HEK293 (cell line): ENCODE measurements at regions of chr5 and their contacts with region 1.

Region 1: DNA sequence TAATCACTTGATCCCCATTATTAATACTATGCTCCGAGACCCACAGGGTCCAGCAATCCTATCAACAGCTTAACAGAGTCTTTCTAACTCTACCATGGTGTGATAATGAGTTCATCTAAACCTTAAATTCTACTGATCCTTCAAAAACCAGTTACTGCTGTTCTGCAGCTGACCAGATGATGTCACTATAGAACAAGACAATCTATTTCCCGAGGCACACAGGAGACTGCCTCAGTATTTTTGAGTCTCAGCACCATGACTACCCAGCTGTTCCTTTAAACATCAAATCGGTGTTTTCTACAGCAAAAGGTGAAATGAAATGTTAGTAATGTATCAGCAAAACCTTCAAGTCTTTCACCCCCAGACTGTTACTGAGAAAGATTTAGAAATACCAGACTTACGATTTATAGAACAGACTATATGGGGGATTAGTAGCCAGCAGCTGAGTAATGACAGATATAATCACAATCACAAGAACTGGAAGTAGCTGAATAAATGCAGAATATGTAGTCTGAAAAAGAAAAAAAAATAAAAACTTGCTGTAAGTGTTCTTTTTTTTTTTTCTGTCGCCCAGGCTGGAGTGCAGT is 16.9 kb downstream of the DNAJC18 start:
- H3K4me3 ChIP-seq: no peak overlapping the region
- H3K27ac ChIP-seq: no peak overlapping the region
- H3K4me1 ChIP-seq: no peaks in the 10 kb centered on the region
- CTCF ChIP-seq: peak; percentile 70

Region 2: GRCh38 chr5:139273572-139274289 is 148.7 kb before region 1 on chr5:
- CTCF ChIA-PET with region 1: interaction called, 7 read pairs
- POLR2A ChIA-PET with region 1: interaction called, 14 read pairs
- H3K4me3 ChIP-seq: peak overlapping the region; percentile 48
- H3K27ac ChIP-seq: peak overlapping the region; percentile 52
- H3K4me1 ChIP-seq: peaks cover 17% of the 10 kb centered on the region
- CTCF ChIP-seq: peak; percentile 56

Region 3: DNA sequence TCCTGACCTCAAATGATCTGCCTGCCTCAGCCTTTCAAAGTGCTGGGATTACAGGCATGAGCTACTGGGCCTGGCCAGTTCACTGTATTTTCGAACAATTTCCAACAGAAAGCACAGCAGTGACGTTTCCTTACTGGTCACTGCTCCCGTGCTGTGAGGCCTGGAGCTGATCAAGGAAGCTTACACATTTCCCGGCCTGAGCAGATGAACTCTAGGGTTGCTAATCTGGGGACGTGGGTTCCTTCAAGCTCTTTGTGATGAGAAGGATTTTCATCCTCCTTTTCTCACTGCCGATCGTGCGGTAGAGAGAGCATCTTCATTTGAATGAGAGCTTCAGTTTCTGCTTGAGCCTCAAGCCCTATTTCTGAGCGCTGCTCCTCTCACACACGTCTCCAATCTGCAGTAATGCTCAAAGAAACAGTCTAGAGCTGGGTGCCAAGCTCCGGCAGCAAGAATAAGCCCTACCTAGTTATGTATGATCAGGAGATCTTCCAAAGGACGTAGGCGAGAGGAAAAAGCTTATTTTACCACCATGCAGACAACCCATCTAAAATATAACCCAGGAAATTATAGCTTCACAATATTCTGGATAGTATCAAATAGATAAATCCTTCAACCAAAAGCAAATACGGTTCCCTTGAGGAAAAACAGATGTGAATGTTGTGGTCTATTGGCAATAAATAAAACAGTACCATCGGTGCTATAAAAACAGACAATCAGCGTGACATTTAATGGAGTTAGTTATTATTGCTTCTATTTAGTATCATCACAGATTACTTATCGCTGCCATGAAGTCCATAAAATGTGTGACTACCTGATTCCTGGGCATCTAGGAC is 11.2 kb before region 1 on chr5:
- CTCF ChIA-PET with region 1: interaction called, 19 read pairs
- POLR2A ChIA-PET with region 1: no interaction called
- H3K4me3 ChIP-seq: no peak overlapping the region
- H3K27ac ChIP-seq: no peak overlapping the region
- H3K4me1 ChIP-seq: no peaks in the 10 kb centered on the region
- CTCF ChIP-seq: no peak

Region 4: GRCh38 chr5:139439013-139439903 is 16.9 kb after region 1 on chr5 and contains the start of gene DNAJC18:
- CTCF ChIA-PET with region 1: interaction called, 29 read pairs
- POLR2A ChIA-PET with region 1: interaction called, 11 read pairs
- H3K4me3 ChIP-seq: peak within 1 kb of the TSS; percentile 80
- H3K27ac ChIP-seq: peak within 1 kb of the TSS; percentile 88
- H3K4me1 ChIP-seq: peaks cover 9% of the 10 kb centered on the region
- CTCF ChIP-seq: peak; percentile 38; the same call in 1 of the 2 replicates

Region 5: GRCh38 chr5:139482050-139482889 is 59.9 kb after region 1 on chr5 and contains the start of gene STING1:
- CTCF ChIA-PET with region 1: interaction called, 18 read pairs
- POLR2A ChIA-PET with region 1: no interaction called
- H3K4me3 ChIP-seq: peak within 1 kb of the TSS; percentile 14; the same call in 1 of the 2 replicates
- H3K27ac ChIP-seq: peak within 1 kb of the TSS; percentile 93
- H3K4me1 ChIP-seq: peaks cover 15% of the 10 kb centered on the region
- CTCF ChIP-seq: no peak

Region 6: GRCh38 chr5:139517683-139518564 is 95.5 kb after region 1 on chr5:
- CTCF ChIA-PET with region 1: interaction called, 246 read pairs
- POLR2A ChIA-PET with region 1: interaction called, 6 read pairs
- H3K4me3 ChIP-seq: peak overlapping the region; percentile 37
- H3K27ac ChIP-seq: peak overlapping the region; percentile 48; the same call in 1 of the 2 replicates
- H3K4me1 ChIP-seq: no peaks in the 10 kb centered on the region
- CTCF ChIP-seq: peak; percentile 100